ENCODE measurements at regions of chr1 and their contacts with region 1.

Region 1: GRCh38 chr1:17013491-17014320 is 2.0 kb upstream of the ATP13A2 start:
- DNase-seq: peak in 1 of 2 experiments; percentile 11
- H3K4me3 ChIP-seq: no peak overlapping the region
- H3K4me3 Mint-ChIP-seq: no peak overlapping the region
- H3K27ac Mint-ChIP-seq: no peak overlapping the region
- H3K4me1 ChIP-seq: peaks cover 23% of the 10 kb centered on the region
- H3K4me1 Mint-ChIP-seq: peaks cover 10% of the 10 kb centered on the region
- H3K27me3 ChIP-seq: no peaks in the 10 kb centered on the region
- H3K27me3 Mint-ChIP-seq: no peaks in the 10 kb centered on the region
- CTCF ChIP-seq: no peak

Region 2: DNA sequence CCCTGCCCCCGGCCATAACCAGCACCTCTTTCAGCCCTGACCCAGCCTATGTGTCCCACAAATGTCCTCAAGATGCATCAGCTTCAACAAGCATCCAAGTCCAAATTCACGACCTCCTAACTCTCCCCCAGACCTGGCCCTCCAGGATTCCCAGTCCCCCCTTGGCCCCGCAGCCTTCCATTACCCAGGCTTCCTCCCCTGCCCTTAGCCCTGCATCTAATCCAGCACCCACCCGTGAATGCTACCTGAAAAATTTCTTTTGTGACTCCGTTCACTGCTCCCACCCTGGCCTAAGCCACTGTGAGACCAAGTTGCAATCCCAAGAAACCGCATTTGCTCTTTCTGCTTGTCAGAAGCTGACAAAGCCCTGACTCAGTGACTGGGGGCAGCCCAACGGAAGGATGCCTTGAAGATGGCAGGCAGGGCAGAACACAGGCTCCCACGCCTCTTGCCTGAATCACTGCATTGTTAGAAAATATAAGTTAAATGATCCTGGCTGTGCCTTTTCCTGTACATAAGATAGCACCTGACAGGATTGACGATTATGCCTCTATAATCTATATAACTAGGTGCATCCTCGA is 32.3 kb before region 1 on chr1:
- CTCF ChIA-PET with region 1: interaction called, 3 read pairs
- POLR2A ChIA-PET with region 1: interaction called, 14 read pairs
- intact Hi-C with region 1: no loop called
- DNase-seq: no peak
- H3K4me3 ChIP-seq: no peak overlapping the region
- H3K4me3 Mint-ChIP-seq: peak overlapping the region; percentile 63
- H3K27ac Mint-ChIP-seq: peak overlapping the region; percentile 13
- H3K4me1 ChIP-seq: no peaks in the 10 kb centered on the region
- H3K4me1 Mint-ChIP-seq: peaks cover 16% of the 10 kb centered on the region
- H3K27me3 ChIP-seq: no peaks in the 10 kb centered on the region
- H3K27me3 Mint-ChIP-seq: no peaks in the 10 kb centered on the region
- CTCF ChIP-seq: no peak

Region 3: DNA sequence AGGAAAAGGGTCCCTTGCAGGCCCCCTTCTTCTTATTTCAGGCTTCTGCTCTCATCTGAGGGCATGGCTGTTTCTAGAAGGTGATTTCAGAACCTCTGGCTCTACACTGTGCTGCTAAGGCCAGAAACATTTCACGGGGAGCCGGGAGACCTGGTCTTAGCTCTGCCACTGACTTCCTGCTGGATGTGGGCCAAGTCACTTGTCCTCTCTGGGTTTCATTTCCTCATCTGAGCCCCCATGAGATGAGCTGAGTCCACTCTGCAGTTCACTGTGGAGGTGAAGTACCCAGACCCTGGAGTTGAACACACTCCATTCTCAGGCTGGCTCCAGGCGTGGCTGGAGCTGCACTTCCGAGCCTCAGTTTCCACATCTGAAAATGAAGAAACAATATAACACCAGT is 193.3 kb after region 1 on chr1:
- CTCF ChIA-PET with region 1: no interaction called
- POLR2A ChIA-PET with region 1: no interaction called
- intact Hi-C with region 1: no loop called
- DNase-seq: no peak
- H3K4me3 ChIP-seq: no peak overlapping the region
- H3K4me3 Mint-ChIP-seq: no peak overlapping the region
- H3K27ac Mint-ChIP-seq: no peak overlapping the region
- H3K4me1 ChIP-seq: no peaks in the 10 kb centered on the region
- H3K4me1 Mint-ChIP-seq: no peaks in the 10 kb centered on the region
- H3K27me3 ChIP-seq: no peaks in the 10 kb centered on the region
- H3K27me3 Mint-ChIP-seq: peaks cover 5% of the 10 kb centered on the region
- CTCF ChIP-seq: no peak